Thyroid gland (tissue), 4 donors: ENCODE measurements at regions of chr16 and their contacts with region 1.

Region 1: DNA sequence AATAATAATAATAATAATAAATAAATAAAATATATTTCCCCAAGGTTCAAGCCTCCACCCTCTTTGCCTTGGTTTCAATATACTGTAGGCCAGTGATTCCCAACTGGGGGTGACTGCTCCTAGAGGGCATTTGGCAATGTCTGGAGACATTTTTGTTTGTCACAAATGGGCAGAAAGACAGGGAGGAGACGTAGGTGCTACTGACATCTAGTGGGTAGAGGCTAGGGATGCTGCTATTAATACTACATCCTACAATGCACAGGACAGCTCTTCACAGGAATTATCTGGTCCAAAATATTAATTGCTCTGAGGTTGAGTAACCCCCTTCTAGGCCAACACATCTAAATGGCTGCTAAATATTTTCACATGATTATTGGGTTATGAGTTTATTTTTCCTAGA is 12.8 kb upstream of the PRR14 start:
- DNase-seq: no peak
- H3K4me3 ChIP-seq: no peak overlapping the region
- H3K27ac ChIP-seq: no peak overlapping the region
- H3K4me1 ChIP-seq: peaks cover 7 to 8% of the 10 kb centered on the region in 2 donors
- H3K27me3 ChIP-seq: no peaks in the 10 kb centered on the region
- CTCF ChIP-seq: peak in 3 of 6 experiments; percentile 9 to 15 (median 13)
- POLR2A ChIP-seq: no peak

Region 2: GRCh38 chr16:30534368-30535105 is 103.4 kb before region 1 on chr16 and contains the start of gene ZNF747:
- intact Hi-C with region 1: loop called (anchors 10 kb)
- DNase-seq: peak; percentile 95
- H3K4me3 ChIP-seq: peak within 1 kb of the TSS; percentile 59 to 81 (median 73)
- H3K27ac ChIP-seq: peak within 1 kb of the TSS; percentile 77 to 92 (median 82)
- H3K4me1 ChIP-seq: peaks cover 16 to 17% of the 10 kb centered on the region in 2 donors
- H3K27me3 ChIP-seq: no peaks in the 10 kb centered on the region
- CTCF ChIP-seq: no peak
- POLR2A ChIP-seq: peak; percentile 32 to 78
- total RNA-seq, gene ZNF747: 13.6 to 30.7 (median 21.8) TPM

Region 3: DNA sequence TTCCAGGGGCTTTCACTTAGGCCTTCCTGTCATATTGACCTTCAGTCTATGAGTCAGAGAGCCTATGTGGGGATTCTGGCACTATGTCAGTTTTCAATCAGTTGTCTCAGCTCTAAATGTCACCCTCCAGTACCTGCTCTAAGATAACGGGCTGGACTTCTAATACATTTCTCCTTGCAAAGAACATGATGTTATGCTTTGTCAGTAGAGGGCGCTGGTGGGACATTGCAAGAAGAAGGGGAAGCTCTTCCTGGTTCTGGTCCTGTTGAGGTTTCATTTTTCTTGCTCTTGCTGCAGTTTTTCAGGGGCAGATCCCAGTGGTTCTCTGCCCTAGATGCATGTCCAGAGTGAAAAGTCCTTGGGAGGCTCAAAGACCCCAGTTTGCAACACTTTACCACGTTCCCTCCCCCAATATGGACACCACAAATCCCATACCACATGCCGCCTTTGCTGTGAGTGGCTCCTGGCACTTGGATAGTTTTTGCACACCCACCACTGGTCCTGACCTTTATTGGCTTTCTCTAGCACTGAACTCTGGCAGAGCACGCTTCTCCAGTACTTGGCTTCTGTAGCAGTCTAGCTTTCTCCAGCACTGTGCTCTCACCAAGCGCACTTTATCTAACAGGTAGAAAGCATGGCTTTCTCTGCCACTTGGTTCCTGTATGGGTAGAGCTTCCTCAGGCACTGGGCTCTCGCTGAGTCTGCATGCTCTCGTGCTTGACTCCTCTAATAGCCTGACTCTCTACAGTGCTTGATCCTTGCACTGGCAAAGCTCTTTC is 206.9 kb after region 1 on chr16:
- intact Hi-C with region 1: no loop called
- DNase-seq: peak; percentile 56 to 75
- H3K4me3 ChIP-seq: no peak overlapping the region
- H3K27ac ChIP-seq: peak overlapping the region in 1 of 3 donors; percentile 41
- H3K4me1 ChIP-seq: peaks cover 5 to 10% of the 10 kb centered on the region in 2 donors
- H3K27me3 ChIP-seq: no peaks in the 10 kb centered on the region
- CTCF ChIP-seq: peak; percentile 63 to 94 (median 88)
- POLR2A ChIP-seq: no peak